Common myeloid progenitor, CD34-positive (primary cell): ENCODE measurements at regions of chr4 and their contacts with region 1.

Region 1: DNA sequence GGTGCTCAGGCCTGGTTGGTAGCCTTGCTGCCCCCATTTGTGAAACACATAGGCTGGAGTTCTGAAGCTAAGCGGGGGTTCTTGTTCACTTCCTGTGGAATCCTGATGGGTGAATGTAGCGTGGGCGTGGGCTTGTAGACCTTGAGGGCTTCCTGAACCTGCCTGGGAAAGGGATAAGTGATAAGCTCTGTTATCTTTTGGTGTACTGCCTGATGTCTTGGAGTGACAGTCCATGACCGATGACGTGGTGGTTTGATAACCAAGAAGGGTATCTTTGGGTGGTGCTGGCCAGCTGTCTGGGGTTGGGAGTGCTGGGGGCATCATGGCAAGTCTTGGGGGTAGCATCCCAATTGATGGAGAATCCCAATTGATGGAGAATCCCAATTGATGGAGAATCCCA is 17.5 kb upstream of the WDR1 start:
- DNase-seq: no peak
- H3K4me3 ChIP-seq: no peak overlapping the region
- H3K27ac ChIP-seq: no peak overlapping the region
- H3K4me1 ChIP-seq: no peaks in the 10 kb centered on the region
- H3K27me3 ChIP-seq: no peaks in the 10 kb centered on the region

Region 2: DNA sequence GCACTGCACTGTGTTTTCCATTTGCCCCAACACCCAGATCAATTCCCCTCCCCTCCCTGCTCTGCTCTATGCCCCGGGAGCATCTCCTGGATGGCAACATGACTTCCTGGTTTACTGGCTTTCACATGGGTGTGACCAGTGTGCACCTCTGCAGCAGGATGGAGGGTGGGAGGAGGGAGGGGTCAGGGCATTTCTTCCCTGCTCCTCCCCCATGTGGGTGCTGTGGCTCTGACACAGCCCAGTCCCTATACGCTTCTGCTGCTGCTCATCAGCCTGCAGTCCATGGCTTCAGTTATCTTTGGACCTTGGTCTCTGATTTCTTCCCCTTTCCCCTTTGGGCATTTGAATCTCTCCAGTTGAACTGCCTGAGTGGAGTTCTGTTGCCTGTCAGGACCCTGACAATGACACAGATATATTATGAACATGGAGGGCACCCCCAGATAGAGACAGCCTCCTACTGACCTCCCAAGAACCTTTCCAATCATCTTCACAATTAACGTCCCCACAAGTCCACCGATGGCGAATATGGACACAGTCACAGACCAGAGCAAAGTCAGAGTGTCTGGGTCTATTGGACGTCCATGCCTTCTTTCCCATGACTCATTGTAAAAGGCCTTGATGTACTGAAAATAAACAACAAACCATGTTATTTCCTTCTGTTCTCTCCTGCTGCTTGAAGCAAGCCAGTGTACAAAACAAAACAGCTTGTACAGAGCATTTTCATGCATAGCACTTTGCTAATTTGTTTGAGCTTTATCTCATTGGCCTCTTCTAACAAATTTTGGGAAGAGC is 137.6 kb before region 1 on chr4:
- CTCF ChIA-PET with region 1: no interaction called
- POLR2A ChIA-PET with region 1: no interaction called
- DNase-seq: no peak
- H3K4me3 ChIP-seq: no peak overlapping the region
- H3K27ac ChIP-seq: no peak overlapping the region
- H3K4me1 ChIP-seq: no peaks in the 10 kb centered on the region
- H3K27me3 ChIP-seq: no peaks in the 10 kb centered on the region

Region 3: DNA sequence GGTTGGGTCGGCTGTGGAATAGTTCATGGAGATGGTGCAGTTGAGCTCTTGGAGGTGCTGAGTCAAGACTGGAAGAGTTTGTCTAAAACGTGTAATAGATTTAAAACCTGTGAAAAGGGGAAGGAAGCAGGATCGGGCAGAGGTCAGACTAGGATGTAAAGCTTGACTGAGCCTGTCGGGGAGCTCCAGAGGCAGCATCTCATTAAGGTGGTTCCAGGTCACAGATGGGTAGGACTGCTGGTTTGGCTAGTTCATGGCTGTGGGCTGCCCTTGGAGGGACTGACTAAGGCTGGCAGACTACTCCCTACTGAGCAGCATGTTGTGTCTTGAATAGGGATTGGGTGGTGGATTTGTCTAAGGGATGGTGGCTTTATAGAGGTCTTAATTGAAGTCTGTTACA is 10.8 kb after region 1 on chr4:
- CTCF ChIA-PET with region 1: interaction called, 11 read pairs
- POLR2A ChIA-PET with region 1: no interaction called
- DNase-seq: peak in 2 of 3 donors; percentile 59
- H3K4me3 ChIP-seq: no peak overlapping the region
- H3K27ac ChIP-seq: no peak overlapping the region
- H3K4me1 ChIP-seq: peaks cover 0 to 7% (median 6%) of the 10 kb centered on the region in 4 experiments
- H3K27me3 ChIP-seq: no peaks in the 10 kb centered on the region

Region 4: DNA sequence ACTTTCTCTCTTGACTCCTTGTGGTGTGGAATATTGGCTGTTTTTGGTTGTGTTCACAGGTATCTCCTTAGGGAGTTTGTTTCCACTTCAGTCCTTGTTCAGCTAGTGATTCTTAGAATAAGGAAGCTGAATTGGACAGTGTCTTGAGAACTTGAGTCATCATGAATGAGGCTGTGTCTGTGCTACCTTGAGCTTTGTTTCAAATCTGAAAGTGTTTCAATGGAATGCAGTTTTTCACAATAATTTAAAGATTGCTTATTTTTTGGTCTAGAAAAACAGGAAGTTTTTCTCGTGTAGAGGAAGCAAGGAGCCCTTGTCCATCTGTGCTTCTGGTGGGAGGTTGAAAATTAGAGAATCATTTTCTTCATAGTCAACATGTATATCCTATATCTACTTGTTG is 246.6 kb after region 1 on chr4:
- CTCF ChIA-PET with region 1: no interaction called
- POLR2A ChIA-PET with region 1: no interaction called
- DNase-seq: peak in 2 of 3 donors; percentile 10 to 11
- H3K4me3 ChIP-seq: no peak overlapping the region
- H3K27ac ChIP-seq: no peak overlapping the region
- H3K4me1 ChIP-seq: no peaks in the 10 kb centered on the region
- H3K27me3 ChIP-seq: peaks cover 0 to 8% (median 0%) of the 10 kb centered on the region in 5 experiments